ENCODE measurements at regions of chr5 and their contacts with region 1.

Region 1: GRCh38 chr5:167730121-167730520 is 561.3 kb upstream of the WWC1 start:
- DNase-seq: no peak
- ATAC-seq: peak; percentile 32

Region 2: GRCh38 chr5:166883016-166883415 is 847.1 kb before region 1 on chr5:
- intact Hi-C with region 1: no loop called
- DNase-seq: no peak
- ATAC-seq: no peak

Region 3: GRCh38 chr5:168219515-168220410 is 489.6 kb after region 1 on chr5:
- intact Hi-C with region 1: loop called (anchors 10 kb)
- DNase-seq: no peak
- ATAC-seq: peak; percentile 84